ENCODE measurements at regions of chr13 and their contacts with region 1.

Region 1: GRCh38 chr13:60258349-60258748 is 94.6 kb upstream of the DIAPH3 start:
- DNase-seq: no peak
- H3K4me3 Mint-ChIP-seq: no peak overlapping the region
- H3K27ac Mint-ChIP-seq: no peak overlapping the region
- H3K4me1 Mint-ChIP-seq: peaks cover 12% of the 10 kb centered on the region
- H3K27me3 Mint-ChIP-seq: peaks cover 13% of the 10 kb centered on the region

Region 2: DNA sequence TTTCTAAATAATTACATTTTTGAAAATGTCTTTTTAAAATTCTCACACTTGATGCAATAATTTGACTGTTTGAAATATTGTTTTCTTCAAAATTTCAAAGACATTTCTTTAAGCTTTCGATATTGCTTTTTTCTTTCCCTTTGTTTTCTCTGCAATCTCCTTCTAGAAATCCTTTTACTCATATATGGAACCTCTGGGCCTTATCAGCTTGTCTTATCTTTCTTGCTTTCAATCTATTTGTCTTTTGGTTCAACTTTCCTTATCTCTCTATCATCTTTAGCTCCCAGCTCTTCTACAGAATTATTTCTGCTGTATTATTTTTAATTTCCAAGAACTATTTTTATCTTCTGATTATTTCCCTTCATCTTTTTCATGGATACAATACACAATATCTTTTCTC is 14.0 kb before region 1 on chr13:
- intact Hi-C with region 1: loop called (anchors 1 kb)
- DNase-seq: no peak
- H3K4me3 Mint-ChIP-seq: no peak overlapping the region
- H3K27ac Mint-ChIP-seq: peak overlapping the region; percentile 5
- H3K4me1 Mint-ChIP-seq: peaks cover 17% of the 10 kb centered on the region
- H3K27me3 Mint-ChIP-seq: peaks cover 23% of the 10 kb centered on the region

Region 3: GRCh38 chr13:60463787-60464186 is 205.4 kb after region 1 on chr13:
- intact Hi-C with region 1: no loop called
- DNase-seq: no peak
- H3K4me3 Mint-ChIP-seq: no peak overlapping the region
- H3K27ac Mint-ChIP-seq: no peak overlapping the region
- H3K4me1 Mint-ChIP-seq: no peaks in the 10 kb centered on the region
- H3K27me3 Mint-ChIP-seq: no peaks in the 10 kb centered on the region